HCT116 (cell line): ENCODE measurements at regions of chr17 and their contacts with region 1.

Region 1: DNA sequence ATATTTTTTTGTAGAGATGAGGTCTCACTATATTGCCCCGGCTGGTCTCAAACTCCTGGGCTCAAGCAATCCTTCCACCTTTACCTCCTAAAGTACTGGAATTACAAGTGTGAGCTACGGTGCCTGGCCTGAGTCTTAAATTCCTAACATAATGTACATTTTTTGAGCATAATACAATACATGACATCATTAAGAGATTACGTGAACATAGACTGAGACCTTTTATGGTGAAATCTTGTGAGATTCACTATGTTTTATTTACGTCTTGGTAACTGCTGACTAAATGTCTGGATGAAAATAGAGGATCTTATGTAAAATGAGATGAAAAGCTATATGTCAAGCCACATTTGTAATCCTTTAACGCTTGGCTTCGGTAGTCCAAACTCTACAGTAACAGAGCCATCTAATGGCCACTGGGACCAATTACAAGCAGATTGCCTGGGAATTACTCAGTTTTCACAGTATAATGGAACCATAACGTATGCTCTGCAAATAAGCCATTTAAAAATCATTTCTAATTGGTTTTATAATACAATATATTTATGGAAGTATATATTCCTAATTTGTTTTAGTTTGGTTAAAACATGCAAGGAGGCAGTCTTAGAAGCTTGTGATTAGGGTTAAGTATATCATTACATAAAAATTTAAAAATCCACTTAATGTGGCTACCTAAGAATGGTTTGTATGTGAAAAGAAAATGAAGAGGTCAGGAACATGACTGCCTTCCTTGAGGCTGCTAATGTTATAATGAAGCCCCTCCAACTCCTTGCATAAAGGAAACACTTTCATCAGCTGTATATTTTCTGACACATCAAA is 8.1 kb upstream of the EFCAB13 start:
- DNase-seq: peak; percentile 74
- ATAC-seq: peak; percentile 97
- H3K4me3 ChIP-seq: no peak overlapping the region
- H3K27ac ChIP-seq: no peak overlapping the region
- H3K4me1 ChIP-seq: peaks cover 0 to 4% of the 10 kb centered on the region in 2 experiments; a peak in 1 of 4 replicates
- H3K27me3 ChIP-seq: no peaks in the 10 kb centered on the region
- CTCF ChIP-seq: peak; percentile 81 to 98 (median 96)
- POLR2A ChIP-seq: no peak
- RAD21 ChIP-seq: peak; percentile 98

Region 2: GRCh38 chr17:46979147-46979863 is 336.4 kb before region 1 on chr17 and contains the start of gene RPRML:
- CTCF ChIA-PET with region 1: no interaction called
- POLR2A ChIA-PET with region 1: no interaction called
- RAD21 ChIA-PET with region 1: no interaction called
- intact Hi-C with region 1: no loop called
- DNase-seq: no peak
- ATAC-seq: peak; percentile 84
- H3K4me3 ChIP-seq: peak within 1 kb of the TSS; percentile 25 to 61
- H3K27ac ChIP-seq: no peak within 1 kb of the TSS; the same call in 1 of the 2 replicates
- H3K4me1 ChIP-seq: peaks cover 8 to 18% of the 10 kb centered on the region in 2 experiments; a peak in 3 of 4 replicates
- H3K27me3 ChIP-seq: no peaks in the 10 kb centered on the region
- CTCF ChIP-seq: no peak
- POLR2A ChIP-seq: no peak
- RAD21 ChIP-seq: no peak
- total RNA-seq, gene RPRML: not detected

Region 3: GRCh38 chr17:47162013-47162622 is 153.5 kb before region 1 on chr17:
- CTCF ChIA-PET with region 1: no interaction called
- POLR2A ChIA-PET with region 1: no interaction called
- RAD21 ChIA-PET with region 1: no interaction called
- intact Hi-C with region 1: loop called (anchors 10 kb)
- DNase-seq: no peak
- ATAC-seq: no peak
- H3K4me3 ChIP-seq: no peak overlapping the region
- H3K27ac ChIP-seq: no peak overlapping the region
- H3K4me1 ChIP-seq: no peaks in the 10 kb centered on the region
- H3K27me3 ChIP-seq: no peaks in the 10 kb centered on the region
- CTCF ChIP-seq: no peak
- POLR2A ChIP-seq: no peak
- RAD21 ChIP-seq: no peak

Region 4: DNA sequence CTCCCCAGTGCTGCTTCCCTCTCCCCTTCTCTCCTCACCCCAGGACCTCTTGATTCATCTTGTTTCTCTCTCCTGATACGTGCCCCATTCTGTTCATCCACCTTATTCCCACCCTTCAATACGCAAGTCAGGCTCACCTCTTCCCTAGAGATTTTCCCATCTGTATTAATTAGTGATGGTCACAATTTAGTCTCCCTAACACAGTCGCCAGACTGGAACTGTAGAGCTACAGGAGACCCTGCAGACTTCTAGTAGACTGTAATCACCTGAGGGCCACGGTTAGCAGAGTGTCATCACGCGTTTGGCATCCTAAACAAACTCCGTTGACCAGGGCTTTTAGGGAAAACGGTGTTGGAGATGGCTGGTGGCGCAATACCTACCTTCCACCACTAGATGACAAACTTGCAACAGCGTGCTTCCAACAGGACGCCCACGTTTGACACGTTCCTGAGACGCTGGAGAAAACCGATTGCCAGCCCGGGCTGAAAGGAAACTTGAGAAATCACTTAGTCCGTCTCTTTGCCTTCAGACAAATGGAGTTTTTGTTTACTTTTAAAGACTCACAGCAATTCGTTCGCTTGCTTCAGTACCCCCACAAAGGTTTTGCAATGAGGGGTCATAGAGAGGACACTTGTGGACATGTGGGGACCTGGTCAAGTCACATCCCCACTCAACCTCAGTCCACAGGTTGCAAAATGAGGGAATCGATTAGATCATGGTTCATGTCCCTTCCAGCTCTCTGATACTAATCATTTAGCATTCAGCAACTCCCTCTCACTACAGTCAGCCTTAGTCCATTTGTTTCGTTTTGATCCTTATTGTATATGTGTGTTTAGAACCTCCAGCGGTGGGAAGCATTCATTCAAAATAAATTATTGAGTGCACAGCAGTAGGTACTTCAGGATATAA is 85.9 kb before region 1 on chr17:
- CTCF ChIA-PET with region 1: interaction called, 19 read pairs
- POLR2A ChIA-PET with region 1: interaction called, 3 read pairs
- RAD21 ChIA-PET with region 1: interaction called in 1 of 2 experiments, 3 read pairs
- intact Hi-C with region 1: loop called (anchors 1 kb)
- DNase-seq: peak; percentile 90
- ATAC-seq: peak; percentile 92
- H3K4me3 ChIP-seq: peak overlapping the region; percentile 15 to 21
- H3K27ac ChIP-seq: no peak overlapping the region
- H3K4me1 ChIP-seq: peaks cover 14 to 28% of the 10 kb centered on the region in 2 experiments
- H3K27me3 ChIP-seq: no peaks in the 10 kb centered on the region
- CTCF ChIP-seq: peak; percentile 97 to 100 (median 99)
- POLR2A ChIP-seq: no peak
- RAD21 ChIP-seq: peak; percentile 100

Region 5: GRCh38 chr17:47368262-47368661 is 52.6 kb after region 1 on chr17:
- CTCF ChIA-PET with region 1: no interaction called
- POLR2A ChIA-PET with region 1: no interaction called
- RAD21 ChIA-PET with region 1: no interaction called
- intact Hi-C with region 1: no loop called
- DNase-seq: no peak
- ATAC-seq: no peak
- H3K4me3 ChIP-seq: no peak overlapping the region
- H3K27ac ChIP-seq: no peak overlapping the region
- H3K4me1 ChIP-seq: no peaks in the 10 kb centered on the region
- H3K27me3 ChIP-seq: no peaks in the 10 kb centered on the region
- CTCF ChIP-seq: no peak
- POLR2A ChIP-seq: no peak
- RAD21 ChIP-seq: no peak

Region 6: DNA sequence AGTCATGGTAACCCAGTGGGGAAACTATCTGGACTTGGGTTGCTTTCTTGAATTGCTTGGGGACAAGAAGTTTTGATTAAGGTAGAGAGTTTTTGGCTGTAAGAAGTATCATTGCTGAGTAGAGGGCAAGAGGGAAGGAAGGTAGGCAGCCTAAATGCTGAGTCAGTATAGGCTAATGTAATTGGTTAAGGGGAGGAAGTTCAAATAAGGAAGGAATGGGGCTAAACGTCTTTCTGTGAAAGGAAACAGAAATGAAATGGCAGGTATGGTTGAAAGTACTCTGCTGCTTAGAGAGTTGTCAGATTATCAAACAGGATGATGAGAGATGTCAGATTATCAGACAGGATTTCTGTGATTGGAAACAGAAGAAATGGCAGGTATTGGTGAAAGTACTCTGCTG is 354.4 kb after region 1 on chr17:
- CTCF ChIA-PET with region 1: no interaction called
- POLR2A ChIA-PET with region 1: no interaction called
- RAD21 ChIA-PET with region 1: no interaction called
- intact Hi-C with region 1: no loop called
- DNase-seq: no peak
- ATAC-seq: no peak; the same call in 1 of the 2 replicates
- H3K4me3 ChIP-seq: no peak overlapping the region
- H3K27ac ChIP-seq: peak overlapping the region; percentile 14; the same call in 1 of the 2 replicates
- H3K4me1 ChIP-seq: no peaks in the 10 kb centered on the region
- H3K27me3 ChIP-seq: no peaks in the 10 kb centered on the region
- CTCF ChIP-seq: no peak
- POLR2A ChIP-seq: no peak
- RAD21 ChIP-seq: no peak